Activated naive CD4-positive, alpha-beta T cell treated with anti-CD3 and anti-CD28 coated beads for 36 hours (primary cell): ENCODE measurements at regions of chr2 and their contacts with region 1.

Region 1: GRCh38 chr2:137133225-137133624 is 367.9 kb downstream of the THSD7B start:
- DNase-seq: no peak
- H3K4me3 Mint-ChIP-seq: no peak overlapping the region
- H3K27ac Mint-ChIP-seq: no peak overlapping the region
- H3K4me1 Mint-ChIP-seq: no peaks in the 10 kb centered on the region
- H3K27me3 Mint-ChIP-seq: no peaks in the 10 kb centered on the region

Region 2: GRCh38 chr2:137096693-137097092 is 36.5 kb before region 1 on chr2:
- CTCF ChIA-PET with region 1: no interaction called
- intact Hi-C with region 1: loop called (anchors 2 kb)
- DNase-seq: no peak
- H3K4me3 Mint-ChIP-seq: no peak overlapping the region
- H3K27ac Mint-ChIP-seq: no peak overlapping the region
- H3K4me1 Mint-ChIP-seq: no peaks in the 10 kb centered on the region
- H3K27me3 Mint-ChIP-seq: no peaks in the 10 kb centered on the region

Region 3: DNA sequence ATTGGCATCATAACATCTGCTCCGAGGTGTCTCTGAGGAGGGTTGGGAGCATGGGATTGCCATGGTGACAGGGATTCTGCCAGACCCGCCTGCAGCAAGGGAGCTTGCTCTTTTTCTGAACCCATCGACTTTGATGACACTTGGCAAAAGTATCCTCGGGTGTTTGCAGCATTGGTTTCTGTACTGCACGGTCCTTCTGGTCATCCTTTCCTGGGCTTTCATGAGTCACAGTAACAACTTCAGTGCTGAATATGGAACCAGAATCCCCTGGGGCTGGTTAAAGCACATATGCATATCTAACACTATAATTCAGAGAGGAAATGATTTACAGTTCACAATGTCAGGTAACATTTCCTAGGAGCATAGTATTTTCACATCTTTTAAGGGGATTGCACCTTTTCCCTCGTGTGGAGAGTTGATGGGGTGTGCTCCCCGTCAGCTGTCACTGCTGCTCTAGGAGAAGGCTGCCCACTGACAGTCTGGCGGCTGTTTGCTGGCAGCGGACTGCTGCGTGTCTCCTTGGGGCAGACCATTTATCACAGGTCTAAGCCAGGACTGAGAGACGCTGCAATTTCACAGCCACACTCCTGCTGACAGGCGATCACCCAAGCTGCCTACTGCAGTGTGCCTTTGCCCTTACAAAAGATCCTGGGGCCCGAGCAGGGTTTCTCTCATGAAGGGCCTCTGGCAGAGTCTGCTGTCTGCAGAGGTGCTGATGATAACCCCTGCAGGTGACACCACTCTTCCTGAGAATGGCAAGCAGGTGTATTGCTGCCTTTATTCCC is 57.4 kb after region 1 on chr2:
- CTCF ChIA-PET with region 1: no interaction called
- intact Hi-C with region 1: no loop called
- DNase-seq: no peak
- H3K4me3 Mint-ChIP-seq: no peak overlapping the region
- H3K27ac Mint-ChIP-seq: no peak overlapping the region
- H3K4me1 Mint-ChIP-seq: no peaks in the 10 kb centered on the region
- H3K27me3 Mint-ChIP-seq: no peaks in the 10 kb centered on the region